Brain microvascular endothelial cell (primary cell): ENCODE measurements at regions of chr11 and their contacts with region 1.

Region 1: DNA sequence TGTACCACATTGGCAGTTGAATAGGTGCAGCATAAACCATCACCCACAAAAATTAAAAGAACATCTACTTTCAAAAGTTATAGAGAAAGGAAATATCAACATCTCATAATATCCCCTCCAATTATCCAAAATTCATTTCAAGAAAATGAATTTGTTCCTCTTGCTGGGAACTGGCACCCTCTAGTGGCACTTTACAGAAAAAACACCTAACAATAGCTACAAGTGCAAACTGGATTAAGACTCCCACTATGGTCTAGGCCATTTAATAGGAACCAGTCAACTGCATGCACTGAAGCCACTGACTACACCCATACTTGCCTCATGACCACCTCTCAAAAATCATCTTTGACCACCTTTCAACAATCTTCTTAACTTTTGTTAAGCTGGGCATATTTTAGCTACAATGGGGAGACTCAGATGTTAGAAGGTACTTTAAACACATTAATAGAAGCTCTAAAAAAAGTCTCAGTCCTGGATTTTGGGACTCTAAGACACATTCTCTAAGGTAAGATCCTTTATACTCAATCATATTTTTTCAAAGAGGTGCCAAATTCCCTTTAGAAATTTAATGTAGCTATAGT is 17.3 kb downstream of the TRAF6 start:
- DNase-seq: peak; percentile 34
- H3K4me3 ChIP-seq: no peak overlapping the region
- H3K27ac ChIP-seq: no peak overlapping the region
- H3K27me3 ChIP-seq: no peaks in the 10 kb centered on the region
- CTCF ChIP-seq: peak; percentile 73

Region 2: DNA sequence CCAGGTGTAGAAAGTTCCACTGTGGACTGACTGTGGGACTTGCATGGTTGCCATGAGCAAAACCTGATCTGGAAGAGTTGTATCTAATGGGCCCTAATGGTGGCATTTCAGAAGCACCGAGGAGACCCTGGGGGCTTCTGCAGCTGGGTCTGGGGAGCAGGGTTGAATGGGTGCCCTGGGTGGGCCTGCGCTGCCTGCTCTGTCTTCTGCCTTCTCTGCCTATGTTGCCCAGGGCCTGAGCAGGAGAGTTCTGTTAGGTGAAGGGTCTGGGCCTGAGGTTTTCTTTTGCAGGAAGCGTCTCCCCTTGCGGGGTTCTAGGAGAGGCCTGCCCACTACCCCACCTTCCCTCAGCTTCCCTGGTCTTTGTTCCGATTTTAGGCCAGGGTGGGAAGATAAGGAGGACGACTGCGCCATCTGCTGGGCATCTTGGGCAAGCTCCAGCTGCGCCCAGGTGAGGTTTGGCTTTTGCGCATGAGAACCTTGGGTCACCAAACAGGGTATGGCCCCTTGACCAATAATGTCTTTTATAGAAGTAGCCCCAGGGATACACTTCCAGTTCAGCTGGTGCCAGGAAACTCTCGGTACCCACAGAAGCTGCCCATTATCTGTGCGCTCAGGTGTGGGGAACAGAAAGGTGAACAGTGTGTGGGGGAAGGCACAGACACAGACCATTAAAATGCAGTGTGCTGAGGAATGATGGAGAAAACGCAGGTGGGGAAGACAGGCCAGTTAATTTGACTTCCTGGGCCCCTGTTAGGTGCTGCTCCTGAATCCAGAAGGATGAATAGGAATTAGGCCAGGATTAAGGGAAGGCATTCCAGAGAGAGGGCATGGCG is 226.8 kb before region 1 on chr11:
- in situ Hi-C with region 1: no loop called
- DNase-seq: peak; percentile 28
- H3K4me3 ChIP-seq: no peak overlapping the region
- H3K27ac ChIP-seq: no peak overlapping the region
- H3K27me3 ChIP-seq: no peaks in the 10 kb centered on the region
- CTCF ChIP-seq: peak; percentile 92

Region 3: DNA sequence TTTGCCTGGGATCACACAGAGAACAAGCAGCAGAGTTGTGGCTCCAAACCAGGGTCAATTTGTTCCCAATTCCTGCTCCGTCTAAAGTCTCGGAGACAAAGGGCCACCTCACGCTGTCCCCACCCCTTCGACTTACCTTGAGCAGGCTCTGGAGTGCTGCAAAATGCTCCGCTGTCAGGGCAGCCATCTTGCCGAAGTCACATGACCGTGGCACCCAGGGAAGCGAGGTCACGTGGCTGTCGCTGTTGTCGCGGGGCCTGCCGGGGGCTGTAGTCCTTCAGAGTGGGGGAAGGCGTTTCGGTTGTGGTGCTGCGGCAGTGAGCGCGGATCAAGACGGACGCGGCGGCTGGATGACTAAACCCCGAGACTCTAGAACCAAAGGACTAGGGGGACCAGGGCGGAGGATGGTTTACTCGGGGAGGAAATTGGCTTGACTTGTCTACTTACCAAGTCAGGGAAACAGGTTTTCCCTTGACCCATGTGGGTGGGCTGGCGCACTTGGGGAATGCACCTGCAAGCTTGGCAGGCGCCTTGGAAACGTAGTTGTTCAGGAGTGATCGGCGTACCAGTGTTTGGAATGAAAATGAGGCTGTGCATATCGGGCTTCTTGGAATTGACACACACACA is 203.5 kb before region 1 on chr11 and contains the start of gene COMMD9:
- in situ Hi-C with region 1: loop called (anchors 25 kb)
- DNase-seq: peak; percentile 95
- H3K4me3 ChIP-seq: peak within 1 kb of the TSS; percentile 95
- H3K27ac ChIP-seq: peak within 1 kb of the TSS; percentile 20
- H3K27me3 ChIP-seq: no peaks in the 10 kb centered on the region
- CTCF ChIP-seq: no peak

Region 4: GRCh38 chr11:36312611-36313472 is 180.0 kb before region 1 on chr11:
- in situ Hi-C with region 1: no loop called
- DNase-seq: peak; percentile 79
- H3K4me3 ChIP-seq: no peak overlapping the region
- H3K27ac ChIP-seq: peak overlapping the region; percentile 54
- H3K27me3 ChIP-seq: no peaks in the 10 kb centered on the region
- CTCF ChIP-seq: no peak

Region 5: DNA sequence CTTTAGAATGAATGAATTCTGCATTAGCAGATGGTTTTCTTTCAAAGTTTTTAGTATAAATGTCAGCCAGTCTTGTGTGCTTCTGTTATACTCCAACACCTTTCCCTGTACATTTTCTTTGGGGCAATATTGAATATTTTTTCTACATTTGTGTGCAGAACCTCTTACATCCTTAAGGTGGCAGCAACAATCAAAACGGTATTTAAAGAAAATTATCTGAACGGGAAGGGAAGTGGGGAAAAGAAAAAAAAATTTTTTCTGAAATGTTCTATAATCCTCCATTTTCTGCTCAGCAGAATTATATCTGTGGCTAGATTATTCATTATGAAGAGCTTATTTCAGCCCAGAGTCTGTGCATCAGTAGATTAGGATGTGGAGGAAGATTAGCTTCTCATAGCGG is 452.6 kb after region 1 on chr11:
- in situ Hi-C with region 1: no loop called
- DNase-seq: no peak
- H3K4me3 ChIP-seq: no peak overlapping the region
- H3K27ac ChIP-seq: no peak overlapping the region
- H3K27me3 ChIP-seq: no peaks in the 10 kb centered on the region
- CTCF ChIP-seq: no peak